HEK293 (cell line): ENCODE measurements at regions of chr19 and their contacts with region 1.

Region 1: DNA sequence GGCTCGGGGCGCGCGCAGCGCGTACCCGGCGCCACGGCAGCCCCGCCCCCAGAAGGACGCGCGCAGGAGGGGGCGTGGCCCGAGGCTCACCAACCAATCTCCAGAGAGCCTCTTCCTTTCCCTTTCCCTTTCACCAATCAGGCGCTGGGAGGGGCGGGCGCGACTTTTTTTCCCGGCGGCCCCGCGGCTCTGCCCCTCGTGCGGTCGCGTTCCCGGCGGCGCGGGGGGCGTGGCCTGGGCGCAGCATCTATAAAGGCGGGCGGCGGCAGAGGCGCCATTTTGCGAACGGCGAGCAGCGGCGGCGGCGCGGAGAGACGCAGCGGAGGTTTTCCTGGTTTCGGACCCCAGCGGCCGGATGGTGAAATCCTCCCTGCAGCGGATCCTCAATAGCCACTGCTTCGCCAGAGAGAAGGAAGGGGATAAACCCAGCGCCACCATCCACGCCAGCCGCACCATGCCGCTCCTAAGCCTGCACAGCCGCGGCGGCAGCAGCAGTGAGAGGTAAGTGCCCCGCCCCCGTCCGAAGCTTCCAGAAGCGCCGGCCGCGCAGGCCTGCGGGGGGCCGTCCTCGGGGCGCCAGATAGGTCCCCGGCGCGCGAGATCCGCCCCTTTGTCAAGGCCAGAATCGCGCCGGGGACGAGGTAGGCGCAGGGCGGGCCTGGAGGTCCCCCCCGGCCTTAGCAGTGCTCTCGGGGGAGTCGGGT is 12.6 kb downstream of the PEAK3 start:
- H3K4me3 ChIP-seq: peak overlapping the region; percentile 99
- H3K27ac ChIP-seq: peak overlapping the region; percentile 98
- H3K4me1 ChIP-seq: 0 out of 2 replicates have a peak, but pooled peaks cover 5% of the 10 kb centered on the region
- CTCF ChIP-seq: peak; percentile 47

Region 2: DNA sequence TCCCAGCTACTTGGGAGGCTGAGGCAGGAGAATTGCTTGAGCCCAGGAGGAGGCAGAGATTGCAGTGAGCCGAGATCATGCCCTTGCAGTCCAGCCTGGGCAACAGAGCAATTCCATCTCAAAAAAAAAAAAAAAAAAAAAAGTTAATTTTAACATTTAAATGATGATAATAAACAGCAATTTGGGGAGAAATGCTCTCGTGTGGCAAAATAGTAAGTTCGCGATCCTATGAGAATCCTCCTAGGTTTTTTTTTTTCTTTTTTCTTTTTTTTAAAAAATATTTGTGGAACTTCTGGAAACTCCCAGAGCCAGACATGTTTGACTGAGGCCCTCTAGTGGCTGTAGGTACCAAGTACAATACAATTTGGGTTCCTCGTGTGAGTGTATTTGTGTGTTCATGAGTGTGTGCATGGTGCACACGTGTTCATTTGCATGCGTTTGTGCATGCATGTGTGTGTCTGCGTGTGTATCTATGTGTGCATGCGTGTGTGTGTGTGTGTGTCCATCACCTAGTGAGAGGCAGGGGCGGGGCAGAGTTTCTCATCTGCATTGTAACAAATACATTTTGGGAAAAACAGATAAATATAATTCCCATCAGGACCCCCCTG is 121.8 kb after region 1 on chr19:
- CTCF ChIA-PET with region 1: interaction called, 25 read pairs
- POLR2A ChIA-PET with region 1: no interaction called
- H3K4me3 ChIP-seq: no peak overlapping the region
- H3K27ac ChIP-seq: no peak overlapping the region
- H3K4me1 ChIP-seq: no peaks in the 10 kb centered on the region
- CTCF ChIP-seq: peak; percentile 75